Activated CD8-positive, alpha-beta T cell treated with anti-CD3 and anti-CD28 coated beads for 36 hours (primary cell): ENCODE measurements at regions of chr9 and their contacts with region 1.

Region 1: GRCh38 chr9:15501179-15501578 is 9.6 kb downstream of the PSIP1 start:
- DNase-seq: no peak
- ATAC-seq: no peak
- H3K4me3 Mint-ChIP-seq: no peak overlapping the region
- H3K27ac Mint-ChIP-seq: peak overlapping the region; percentile 30
- H3K4me1 Mint-ChIP-seq: peaks cover 65% of the 10 kb centered on the region
- H3K27me3 Mint-ChIP-seq: no peaks in the 10 kb centered on the region
- CTCF ChIP-seq: no peak

Region 2: DNA sequence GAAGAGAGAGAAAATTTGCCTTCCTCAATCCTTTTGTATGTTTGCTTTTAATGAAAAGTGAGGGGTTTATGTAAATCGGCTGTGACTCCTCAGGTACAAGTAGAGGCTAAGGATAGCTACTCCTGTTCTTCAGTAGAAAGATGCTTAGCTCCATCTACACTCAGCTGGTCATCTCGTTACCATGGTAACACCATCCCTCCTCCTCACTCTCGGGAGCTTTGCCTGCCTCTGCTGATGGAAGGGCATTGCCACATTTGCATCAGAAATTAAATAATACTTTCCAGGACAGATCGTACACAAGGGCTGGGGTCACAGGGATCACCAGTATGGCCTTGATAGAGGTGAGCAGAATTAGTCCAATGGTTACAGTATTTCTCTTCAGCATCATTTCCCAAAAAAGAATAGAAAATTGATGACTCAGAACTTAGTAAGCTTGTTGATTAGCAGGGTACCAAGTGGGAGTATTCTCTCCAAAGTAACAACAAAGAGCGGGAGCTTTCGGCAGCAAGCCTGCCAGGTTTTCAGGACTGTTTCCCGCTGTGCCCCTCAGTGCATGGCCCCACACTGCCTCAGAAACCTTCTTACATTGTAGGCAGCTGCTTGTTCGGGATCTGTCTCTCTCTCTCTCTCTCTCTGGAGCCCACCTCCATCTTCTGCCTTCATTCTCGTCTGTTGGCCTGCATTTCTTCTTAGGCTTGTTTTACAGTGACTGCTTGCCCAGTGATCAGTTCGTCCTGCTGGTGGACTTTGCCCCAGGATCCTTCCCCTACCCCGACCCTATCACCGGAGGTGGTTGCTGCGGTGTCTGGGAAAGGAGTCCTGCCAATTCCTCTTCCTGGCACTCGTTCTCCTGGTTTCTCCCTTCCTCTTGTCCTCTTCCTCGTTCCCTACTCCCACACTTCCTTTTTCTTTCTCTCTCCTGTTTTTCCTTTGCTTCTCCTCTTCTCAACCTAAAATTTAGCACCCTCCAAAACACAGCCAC is 130.4 kb before region 1 on chr9:
- CTCF ChIA-PET with region 1: no interaction called
- POLR2A ChIA-PET with region 1: no interaction called
- intact Hi-C with region 1: no loop called
- DNase-seq: no peak
- ATAC-seq: no peak
- H3K4me3 Mint-ChIP-seq: no peak overlapping the region
- H3K27ac Mint-ChIP-seq: no peak overlapping the region
- H3K4me1 Mint-ChIP-seq: no peaks in the 10 kb centered on the region
- H3K27me3 Mint-ChIP-seq: peaks cover 1% of the 10 kb centered on the region
- CTCF ChIP-seq: no peak

Region 3: DNA sequence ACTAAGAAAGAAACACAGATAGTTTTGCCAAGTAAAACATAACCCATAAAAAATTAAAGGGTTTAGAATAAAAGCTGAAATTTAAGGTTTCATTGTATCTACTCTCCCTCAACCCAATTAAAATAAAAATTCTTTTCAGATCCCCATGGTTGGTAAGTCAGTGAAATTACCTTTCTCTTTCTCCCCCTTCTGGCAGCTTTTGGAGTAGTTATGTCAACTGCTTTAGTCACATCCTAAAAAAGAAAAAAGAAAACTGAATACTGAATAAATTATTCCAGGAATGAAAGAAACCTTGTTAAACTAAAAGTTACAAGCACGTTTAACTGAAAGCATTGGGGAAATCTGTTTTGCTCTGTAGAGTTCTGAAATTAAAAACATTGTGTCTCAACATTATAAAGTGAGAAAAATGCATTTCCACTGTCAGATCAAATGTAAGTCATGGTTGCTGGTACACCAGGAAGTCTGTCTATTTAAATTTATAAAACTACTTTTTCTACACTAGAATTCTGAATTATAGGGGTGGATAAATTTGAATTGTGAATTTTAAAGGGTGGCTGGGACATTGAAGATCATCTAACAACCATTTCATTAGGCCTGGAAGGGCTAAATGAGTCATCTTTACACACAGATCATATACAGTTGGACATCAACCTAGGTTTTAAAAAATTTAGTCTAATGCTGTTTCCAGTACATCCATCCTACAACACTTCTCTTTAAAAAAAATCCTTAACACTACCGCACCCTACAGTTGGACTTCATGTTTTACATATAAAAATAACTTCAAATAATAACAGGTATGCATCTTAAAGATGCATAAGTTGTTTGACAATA is 15.1 kb before region 1 on chr9:
- CTCF ChIA-PET with region 1: interaction called, 4 read pairs
- POLR2A ChIA-PET with region 1: interaction called, 4 read pairs
- intact Hi-C with region 1: loop called (anchors 2 kb)
- DNase-seq: no peak
- ATAC-seq: peak; percentile 65
- H3K4me3 Mint-ChIP-seq: no peak overlapping the region
- H3K27ac Mint-ChIP-seq: peak overlapping the region; percentile 75
- H3K4me1 Mint-ChIP-seq: peaks cover 35% of the 10 kb centered on the region
- H3K27me3 Mint-ChIP-seq: no peaks in the 10 kb centered on the region
- CTCF ChIP-seq: peak; percentile 68